Spleen (tissue), 13 donors: ENCODE measurements at regions of chr3 and their contacts with region 1.

Region 1: DNA sequence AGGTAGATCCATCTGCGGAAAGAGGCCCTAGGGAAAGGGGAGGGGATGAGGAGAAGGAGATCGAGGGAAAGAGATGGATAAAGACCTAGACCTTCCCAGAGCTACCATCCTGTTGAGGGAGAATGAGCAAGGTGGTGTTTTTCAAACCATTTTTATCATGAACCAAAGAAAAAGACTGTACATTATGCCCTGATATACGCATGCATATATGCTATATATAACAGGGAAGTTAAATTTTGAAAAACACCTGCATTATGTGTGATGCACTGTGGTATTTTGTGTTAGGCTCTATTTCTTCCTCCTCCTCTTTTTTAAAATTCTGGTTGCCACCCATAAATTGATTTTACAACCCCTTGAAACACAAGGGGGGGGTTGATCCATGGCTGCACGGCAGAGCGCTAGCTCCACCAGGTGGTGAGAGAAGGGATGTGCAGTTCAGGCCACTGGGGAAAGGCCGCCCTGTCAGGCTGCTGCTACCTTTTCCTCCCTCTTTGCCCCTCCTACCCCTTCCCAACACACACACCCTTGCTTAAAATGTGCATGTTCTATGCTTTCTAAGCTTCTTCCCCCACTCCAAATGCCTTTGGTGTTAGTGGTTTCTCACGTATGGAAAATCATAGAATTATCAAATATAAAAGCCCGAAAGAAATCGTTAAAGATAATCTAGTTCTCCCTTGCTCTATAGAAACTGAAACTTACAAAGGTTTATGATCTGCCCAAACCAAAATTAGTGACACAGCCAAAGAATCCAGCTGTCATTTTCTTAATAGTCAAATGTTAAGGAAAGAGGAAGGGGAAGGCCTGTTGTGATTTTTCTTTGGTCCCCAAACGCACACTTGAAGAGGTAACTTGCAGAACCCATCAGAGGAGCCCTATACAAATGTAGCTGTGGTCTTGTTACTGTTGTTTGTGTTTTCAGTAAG is 262.0 kb upstream of the UMPS start:
- DNase-seq: no peak
- H3K4me3 ChIP-seq: no peak overlapping the region
- H3K27ac ChIP-seq: no peak overlapping the region
- H3K4me1 ChIP-seq: peaks cover 0 to 6% (median 0%) of the 10 kb centered on the region in 6 donors
- H3K27me3 ChIP-seq: peaks cover 0 to 4% (median 0%) of the 10 kb centered on the region in 7 donors
- CTCF ChIP-seq: peak; percentile 51 to 88 (median 77)
- POLR2A ChIP-seq: no peak

Region 2: GRCh38 chr3:124019291-124019690 is 448.9 kb before region 1 on chr3:
- intact Hi-C with region 1: loop called (anchors 5 kb)
- DNase-seq: no peak
- H3K4me3 ChIP-seq: no peak overlapping the region
- H3K27ac ChIP-seq: no peak overlapping the region
- H3K4me1 ChIP-seq: peaks cover 0 to 10% (median 0%) of the 10 kb centered on the region in 6 donors
- H3K27me3 ChIP-seq: peaks cover 0 to 12% (median 0%) of the 10 kb centered on the region in 7 donors
- CTCF ChIP-seq: no peak
- POLR2A ChIP-seq: no peak